OCI-LY7 (cell line): ENCODE measurements at regions of chr1 and their contacts with region 1.

Region 1: GRCh38 chr1:145996433-145997015 is at the start of gene TXNIP:
- DNase-seq: peak; percentile 95
- H3K4me3 ChIP-seq: peak within 1 kb of the TSS; percentile 81
- H3K27ac ChIP-seq: peak within 1 kb of the TSS; percentile 81
- H3K4me1 ChIP-seq: peaks cover 50% of the 10 kb centered on the region
- CTCF ChIP-seq: no peak
- total RNA-seq, gene TXNIP: 99.9 and 144 TPM in 2 replicates

Region 2: DNA sequence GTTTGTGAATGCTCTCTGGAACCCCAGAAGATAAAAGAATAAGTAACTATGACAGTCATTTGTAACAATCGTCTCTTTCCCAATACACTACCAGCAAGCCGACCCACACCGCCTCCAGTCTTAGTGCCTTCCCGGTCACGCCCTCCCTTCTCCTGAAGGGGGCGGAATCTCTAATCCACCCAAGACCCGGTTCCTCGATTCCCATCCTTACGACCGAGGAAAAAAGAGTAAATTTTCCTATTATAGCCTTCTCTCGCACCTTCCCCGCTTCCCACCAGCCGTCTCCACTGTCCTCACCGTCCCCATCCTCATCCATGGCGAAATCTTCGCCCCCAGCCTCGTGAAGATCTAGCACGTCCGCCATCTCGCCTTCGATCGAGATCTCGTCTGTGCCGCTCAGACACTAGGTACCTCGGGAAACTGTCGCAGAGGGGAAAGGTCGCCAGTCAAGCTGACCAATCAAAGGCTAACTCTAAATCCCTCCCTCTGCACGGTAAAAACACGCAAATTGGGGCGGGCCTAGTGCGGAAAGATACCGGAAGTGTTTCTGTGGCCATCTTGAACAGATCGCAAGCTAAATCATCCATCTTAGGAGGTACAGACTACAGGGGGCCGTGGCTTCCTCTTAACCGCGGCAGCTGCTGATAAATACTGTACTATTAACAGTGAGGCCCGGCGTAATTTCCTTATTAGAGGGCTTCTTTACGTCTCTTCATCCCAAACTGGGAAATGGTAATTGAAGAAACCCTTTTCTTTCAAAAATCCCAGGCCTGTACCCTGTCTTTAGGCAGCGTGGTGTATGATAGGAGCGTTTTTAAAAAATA is 69.2 kb before region 1 on chr1 and contains the start of gene RBM8A:
- CTCF ChIA-PET with region 1: no interaction called
- POLR2A ChIA-PET with region 1: interaction called, 6 read pairs
- intact Hi-C with region 1: loop called (anchors 5 kb)
- DNase-seq: peak; percentile 99
- H3K4me3 ChIP-seq: peak within 1 kb of the TSS; percentile 92
- H3K27ac ChIP-seq: peak within 1 kb of the TSS; percentile 91
- H3K4me1 ChIP-seq: peaks cover 25% of the 10 kb centered on the region
- CTCF ChIP-seq: peak; percentile 88
- total RNA-seq, gene RBM8A: 135 and 239 TPM in 2 replicates

Region 3: GRCh38 chr1:145985502-145986439 is 10.8 kb before region 1 on chr1:
- CTCF ChIA-PET with region 1: no interaction called
- POLR2A ChIA-PET with region 1: interaction called, 67 read pairs
- intact Hi-C with region 1: no loop called
- DNase-seq: no peak
- H3K4me3 ChIP-seq: no peak overlapping the region
- H3K27ac ChIP-seq: no peak overlapping the region
- H3K4me1 ChIP-seq: peaks cover 60% of the 10 kb centered on the region
- CTCF ChIP-seq: no peak

Region 4: DNA sequence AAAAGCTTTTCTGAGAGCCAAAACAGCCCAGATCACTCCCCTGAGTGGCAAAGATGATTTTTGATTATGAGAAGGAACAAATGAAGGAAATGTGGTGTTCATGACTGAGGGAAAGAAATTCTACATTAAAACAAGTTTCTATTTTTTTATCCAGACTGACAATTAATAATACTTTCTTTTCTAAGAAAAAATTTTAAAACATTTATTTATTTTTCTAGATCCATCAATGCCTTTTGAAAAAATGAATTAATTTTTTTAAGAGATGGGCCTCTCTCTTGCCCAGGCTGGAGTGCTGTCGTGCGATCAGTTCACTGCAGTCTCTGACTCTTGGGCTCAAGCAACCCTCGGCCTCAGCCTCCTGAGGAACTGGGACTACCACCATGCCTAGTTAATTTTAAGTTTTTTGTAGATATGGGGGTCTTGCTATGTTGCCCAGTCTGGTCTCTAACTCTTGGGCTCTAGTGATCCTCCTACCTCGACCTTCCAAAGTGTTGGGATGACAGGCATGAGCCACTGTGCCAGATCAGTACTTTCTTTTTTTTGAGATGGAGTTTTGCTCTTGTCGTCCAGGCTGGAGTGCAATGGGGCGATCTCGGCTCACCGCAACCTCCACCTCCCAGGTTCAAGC is 11.1 kb after region 1 on chr1:
- CTCF ChIA-PET with region 1: no interaction called
- POLR2A ChIA-PET with region 1: interaction called, 5 read pairs
- intact Hi-C with region 1: loop called (anchors 1 kb)
- DNase-seq: no peak
- H3K4me3 ChIP-seq: no peak overlapping the region
- H3K27ac ChIP-seq: no peak overlapping the region
- H3K4me1 ChIP-seq: peaks cover 8% of the 10 kb centered on the region
- CTCF ChIP-seq: peak; percentile 62; the same call in 1 of the 2 replicates

Region 5: GRCh38 chr1:146036965-146037646 is 40.6 kb after region 1 on chr1:
- CTCF ChIA-PET with region 1: no interaction called
- POLR2A ChIA-PET with region 1: interaction called, 5 read pairs
- intact Hi-C with region 1: loop called (anchors 2 kb)
- DNase-seq: peak; percentile 84
- H3K4me3 ChIP-seq: peak overlapping the region; percentile 76
- H3K27ac ChIP-seq: peak overlapping the region; percentile 93
- H3K4me1 ChIP-seq: peaks cover 35% of the 10 kb centered on the region
- CTCF ChIP-seq: no peak